Mammary epithelial cell (primary cell): ENCODE measurements at regions of chr11 and their contacts with region 1.

Region 1: DNA sequence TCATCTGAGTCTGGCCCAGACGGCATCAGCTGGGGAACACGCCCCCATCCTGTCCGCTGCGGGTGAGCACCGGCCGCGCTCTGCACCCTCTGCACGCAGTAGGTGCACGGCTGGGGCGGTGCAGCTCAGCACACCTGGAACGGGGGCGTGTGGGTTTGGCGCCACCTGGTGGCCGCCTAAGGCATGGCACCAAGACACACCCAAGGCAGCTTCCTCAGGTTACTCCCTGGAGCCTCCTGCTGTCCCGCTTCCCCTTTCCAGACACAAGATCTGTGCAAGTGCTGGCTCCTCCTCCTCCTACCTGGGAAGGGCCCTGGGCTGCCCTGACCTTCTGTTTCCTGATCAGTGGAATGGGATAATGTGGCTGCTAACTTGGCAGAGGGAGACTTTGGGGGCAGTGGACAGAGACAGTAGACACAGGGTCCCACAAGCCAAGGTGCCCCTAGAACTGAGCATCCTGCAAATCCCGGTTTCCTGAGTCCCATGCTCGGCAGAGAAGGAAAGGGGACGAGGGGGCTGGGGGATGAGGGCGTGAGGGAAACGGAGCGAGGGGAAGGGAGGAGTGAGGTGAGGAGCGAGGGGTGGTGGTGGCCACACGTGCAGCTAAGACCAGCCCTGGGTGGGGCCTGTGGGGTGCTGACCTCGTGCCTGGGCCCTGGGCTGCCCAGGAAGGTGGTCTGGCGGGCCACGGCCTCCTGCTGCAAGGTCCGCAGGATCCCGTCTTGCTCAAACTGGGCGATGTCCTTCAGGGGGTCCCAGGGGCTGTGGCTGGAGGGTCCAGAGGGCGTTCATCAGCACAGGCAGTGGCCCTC is 34.8 kb upstream of the CARS1 start:
- DNase-seq: peak; percentile 73
- H3K4me3 ChIP-seq: no peak overlapping the region
- H3K27ac ChIP-seq: no peak overlapping the region
- H3K4me1 ChIP-seq: peaks cover 18% of the 10 kb centered on the region
- H3K27me3 ChIP-seq: no peaks in the 10 kb centered on the region
- CTCF ChIP-seq: peak; percentile 96

Region 2: DNA sequence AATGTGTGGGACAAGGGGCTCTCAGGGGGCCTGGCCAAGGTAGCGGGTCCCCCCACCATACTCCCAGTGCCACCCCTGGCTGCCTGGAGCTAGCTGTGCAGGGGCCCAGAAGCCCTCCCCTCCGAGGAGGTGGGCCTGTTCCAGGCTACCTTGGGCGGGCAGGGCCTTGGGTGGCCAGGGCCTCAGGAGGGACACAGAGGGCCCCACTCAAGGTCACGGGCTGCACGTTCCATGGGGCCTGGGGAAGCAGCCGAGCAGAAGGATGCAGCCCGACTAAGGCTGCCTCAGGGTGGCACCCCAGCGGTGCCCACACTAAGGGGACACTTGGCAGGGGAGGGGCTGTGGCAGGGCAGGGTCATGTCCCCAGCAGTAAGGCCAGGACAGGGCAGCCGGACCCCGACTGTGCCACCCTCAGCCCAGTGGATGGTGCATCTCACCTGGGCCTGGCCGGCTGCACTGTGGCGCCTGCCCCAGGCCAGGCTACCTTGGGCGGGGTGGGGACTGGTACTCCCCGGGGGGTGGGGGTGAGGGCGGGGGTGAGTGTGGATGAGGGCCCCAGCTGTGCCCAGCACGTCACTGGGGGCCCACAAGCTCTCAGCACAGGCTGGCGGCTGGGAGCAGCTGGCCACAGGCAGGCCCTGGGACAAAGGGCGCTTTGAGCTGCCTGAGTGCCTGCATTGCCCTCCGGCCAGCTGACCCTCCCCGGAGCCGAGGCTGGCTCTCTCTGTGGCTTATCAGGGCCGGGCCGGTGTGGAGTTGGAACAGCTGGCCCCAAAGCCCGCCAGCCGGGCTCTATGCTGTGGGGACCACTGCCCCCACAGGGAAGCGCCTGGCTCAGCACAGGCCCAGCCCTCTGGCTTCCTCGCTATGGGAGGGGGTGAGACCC is 530.1 kb before region 1 on chr11:
- CTCF ChIA-PET with region 1: no interaction called
- dilution Hi-C with region 1: no loop called
- in situ Hi-C with region 1: no loop called
- intact Hi-C with region 1: no loop called
- DNase-seq: no peak
- H3K4me3 ChIP-seq: no peak overlapping the region
- H3K27ac ChIP-seq: no peak overlapping the region
- H3K4me1 ChIP-seq: no peaks in the 10 kb centered on the region
- H3K27me3 ChIP-seq: no peaks in the 10 kb centered on the region
- CTCF ChIP-seq: no peak

Region 3: DNA sequence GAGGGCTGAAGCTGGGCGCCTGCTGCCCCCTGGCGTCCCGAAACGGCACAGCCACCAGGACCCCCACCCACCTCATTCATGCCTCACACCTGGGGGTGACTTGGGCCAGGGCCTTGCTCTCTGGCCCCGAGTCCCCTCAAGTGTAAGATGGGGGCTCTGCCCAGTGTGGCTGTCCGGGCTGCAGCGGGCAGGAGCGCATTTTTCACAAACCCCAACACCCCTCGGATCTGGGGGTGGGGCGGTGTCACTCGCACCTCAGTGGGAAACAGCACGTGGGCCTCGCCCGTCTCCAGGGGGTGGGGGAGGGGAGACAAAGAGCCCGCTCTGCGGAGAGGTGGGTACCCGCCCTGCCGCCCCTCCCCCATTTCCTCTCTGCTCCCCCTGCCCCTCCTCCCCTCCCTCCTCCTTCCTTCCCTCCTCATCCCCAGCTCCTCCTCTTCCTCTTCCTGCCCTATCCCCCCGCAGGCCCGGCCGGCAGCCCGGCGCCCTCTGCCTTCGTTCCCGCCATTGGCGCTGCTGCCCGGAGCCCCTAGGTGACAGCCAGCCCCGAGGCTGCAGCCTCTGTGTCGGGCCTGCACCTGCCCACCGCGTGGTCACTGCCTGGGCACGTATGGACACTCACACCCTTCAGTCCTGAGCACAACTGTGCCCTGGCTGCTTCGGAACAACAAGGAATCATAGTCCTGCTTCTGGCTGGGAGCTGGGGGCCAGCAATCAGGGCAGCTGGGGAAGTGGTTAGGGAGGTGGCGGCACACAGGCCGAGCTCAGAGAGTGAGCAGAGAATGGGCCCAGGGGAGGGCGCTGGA is 199.6 kb before region 1 on chr11:
- CTCF ChIA-PET with region 1: no interaction called
- dilution Hi-C with region 1: no loop called
- in situ Hi-C with region 1: no loop called
- intact Hi-C with region 1: loop called (anchors 2 kb)
- DNase-seq: no peak
- H3K4me3 ChIP-seq: peak overlapping the region in 2 of 3 experiments; percentile 38 to 48
- H3K27ac ChIP-seq: no peak overlapping the region
- H3K4me1 ChIP-seq: peaks cover 29% of the 10 kb centered on the region
- H3K27me3 ChIP-seq: no peaks in the 10 kb centered on the region
- CTCF ChIP-seq: peak; percentile 68 to 94

Region 4: DNA sequence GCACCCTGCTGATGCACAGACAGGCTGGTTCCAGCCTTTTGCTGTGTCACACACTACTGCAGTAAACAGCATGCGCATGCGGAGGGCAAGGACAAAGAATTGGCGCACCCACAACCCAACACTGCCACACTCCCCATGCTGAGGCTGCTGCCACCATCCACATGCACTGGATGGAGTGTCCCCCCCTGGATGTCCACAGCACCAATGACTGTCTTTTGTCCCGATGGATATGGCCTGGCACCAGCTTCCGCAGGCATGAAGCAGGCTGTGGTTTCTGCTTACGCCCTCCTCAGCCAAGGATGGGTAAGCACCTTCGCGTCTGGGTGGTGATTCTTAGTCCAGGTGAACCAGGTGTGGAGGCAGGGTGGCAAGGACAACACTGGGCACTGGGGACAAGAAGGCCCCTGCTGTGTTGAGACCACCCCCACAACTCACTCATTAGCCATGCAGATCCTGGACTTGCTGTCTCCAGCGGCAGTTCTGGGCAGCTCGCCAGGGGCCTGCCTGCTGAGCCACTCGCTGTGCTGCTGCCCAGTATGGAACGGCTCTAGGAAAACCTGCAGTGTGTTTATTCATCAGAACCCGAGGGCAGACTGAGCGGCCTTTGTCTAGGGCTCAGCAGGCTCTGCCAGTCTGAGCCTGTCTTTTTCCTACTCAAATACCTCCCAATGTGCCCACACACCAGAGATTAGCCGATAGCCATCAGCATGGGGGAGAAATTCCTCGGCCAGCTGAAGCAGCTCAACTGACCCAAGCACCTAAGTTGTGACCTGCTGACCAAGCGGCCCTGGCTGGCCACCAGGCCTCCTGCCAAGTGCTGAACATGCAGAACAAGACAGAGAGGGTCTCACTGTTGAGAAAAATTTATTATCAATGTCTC is 91.7 kb before region 1 on chr11:
- CTCF ChIA-PET with region 1: no interaction called
- dilution Hi-C with region 1: loop called (anchors 5 kb)
- in situ Hi-C with region 1: no loop called
- intact Hi-C with region 1: no loop called
- DNase-seq: peak; percentile 96
- H3K4me3 ChIP-seq: no peak overlapping the region
- H3K27ac ChIP-seq: peak overlapping the region; percentile 63
- H3K4me1 ChIP-seq: peaks cover 63% of the 10 kb centered on the region
- H3K27me3 ChIP-seq: no peaks in the 10 kb centered on the region
- CTCF ChIP-seq: no peak

Region 5: DNA sequence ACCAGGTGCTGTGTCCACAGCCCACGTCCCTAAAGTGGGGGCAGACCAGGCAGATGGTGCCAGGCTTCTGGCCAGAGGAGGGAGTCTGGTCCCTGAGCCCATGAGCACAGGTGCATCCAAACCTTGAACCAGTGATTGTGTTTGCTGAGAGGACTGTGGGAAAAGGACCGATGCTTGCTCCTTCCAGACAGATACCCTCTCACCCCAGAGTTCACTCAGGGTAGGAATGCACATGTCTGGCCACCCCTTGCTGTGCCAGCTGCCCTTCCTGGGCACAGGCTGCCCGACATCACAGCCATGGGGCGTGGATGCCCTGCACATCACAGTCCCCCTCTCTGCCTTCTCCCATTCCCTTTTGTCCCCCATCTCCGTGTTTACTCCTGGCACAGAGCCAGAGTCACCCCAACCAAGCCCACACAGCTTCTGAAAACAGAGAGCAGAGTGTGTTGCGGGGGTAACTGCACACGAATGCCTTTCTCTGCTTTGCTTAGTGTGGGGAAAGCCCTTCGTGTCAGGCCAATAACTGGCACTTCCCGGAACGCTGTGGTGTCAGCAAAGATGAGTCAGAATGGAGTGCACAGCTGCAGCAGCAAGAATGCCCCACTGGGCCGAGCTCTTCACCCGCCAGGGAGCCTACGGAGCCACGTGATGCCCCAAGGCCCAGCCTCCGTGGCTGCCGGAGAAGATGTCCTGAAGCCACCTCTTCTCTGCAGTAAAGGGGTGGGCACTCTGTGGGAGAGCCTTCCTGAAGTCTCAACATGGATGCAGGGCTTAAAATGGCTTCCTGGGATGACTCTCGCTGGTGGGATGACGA is 42.4 kb before region 1 on chr11:
- CTCF ChIA-PET with region 1: interaction called, 6 read pairs
- dilution Hi-C with region 1: no loop called
- in situ Hi-C with region 1: loop called in 1 of 2 experiments (anchors 10 kb)
- intact Hi-C with region 1: loop called (anchors 2 kb)
- DNase-seq: peak; percentile 88
- H3K4me3 ChIP-seq: no peak overlapping the region
- H3K27ac ChIP-seq: peak overlapping the region; percentile 46
- H3K4me1 ChIP-seq: peaks cover 14% of the 10 kb centered on the region
- H3K27me3 ChIP-seq: no peaks in the 10 kb centered on the region
- CTCF ChIP-seq: peak; percentile 34 to 59

Region 6: DNA sequence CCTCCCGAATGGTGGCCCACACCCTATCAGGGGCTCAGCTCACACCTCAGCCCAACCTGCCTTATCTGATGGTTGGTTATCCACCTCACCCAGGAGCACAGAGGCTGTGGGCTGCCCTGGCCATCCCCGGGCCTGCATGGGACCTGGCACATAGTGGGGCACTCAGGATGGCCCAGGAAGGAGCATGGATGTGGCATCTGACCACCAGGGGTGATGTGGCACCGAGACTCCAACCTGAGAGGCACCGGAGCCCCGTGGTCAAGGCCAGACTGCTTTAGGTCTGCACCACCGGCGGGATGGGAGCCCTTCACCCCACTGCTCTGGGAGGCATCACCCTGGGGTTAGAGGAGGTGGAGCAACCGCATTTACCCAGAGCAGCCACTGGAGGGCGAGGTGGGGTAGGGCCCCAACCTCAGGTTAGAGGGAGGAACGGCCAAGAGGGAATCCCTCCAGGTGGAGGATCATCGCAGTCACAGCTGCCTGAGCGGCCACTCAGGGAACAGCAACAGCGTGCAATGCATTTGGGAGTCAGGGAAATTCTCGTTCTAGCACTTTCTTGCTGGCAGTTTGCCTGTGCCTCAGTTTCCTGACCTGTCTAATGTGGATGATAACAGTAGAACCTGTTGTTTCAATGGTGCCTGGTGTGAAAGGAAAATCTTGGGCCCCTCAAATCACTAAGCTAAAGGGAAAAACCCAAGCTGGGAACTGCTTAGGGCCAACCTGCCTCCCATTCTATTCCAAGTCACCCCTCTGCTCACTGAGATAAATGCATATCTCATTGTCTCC is 18.1 kb after region 1 on chr11:
- CTCF ChIA-PET with region 1: no interaction called
- dilution Hi-C with region 1: no loop called
- in situ Hi-C with region 1: no loop called
- intact Hi-C with region 1: no loop called
- DNase-seq: peak; percentile 34
- H3K4me3 ChIP-seq: no peak overlapping the region
- H3K27ac ChIP-seq: no peak overlapping the region
- H3K4me1 ChIP-seq: no peaks in the 10 kb centered on the region
- H3K27me3 ChIP-seq: no peaks in the 10 kb centered on the region
- CTCF ChIP-seq: peak; percentile 61 to 77

Region 7: DNA sequence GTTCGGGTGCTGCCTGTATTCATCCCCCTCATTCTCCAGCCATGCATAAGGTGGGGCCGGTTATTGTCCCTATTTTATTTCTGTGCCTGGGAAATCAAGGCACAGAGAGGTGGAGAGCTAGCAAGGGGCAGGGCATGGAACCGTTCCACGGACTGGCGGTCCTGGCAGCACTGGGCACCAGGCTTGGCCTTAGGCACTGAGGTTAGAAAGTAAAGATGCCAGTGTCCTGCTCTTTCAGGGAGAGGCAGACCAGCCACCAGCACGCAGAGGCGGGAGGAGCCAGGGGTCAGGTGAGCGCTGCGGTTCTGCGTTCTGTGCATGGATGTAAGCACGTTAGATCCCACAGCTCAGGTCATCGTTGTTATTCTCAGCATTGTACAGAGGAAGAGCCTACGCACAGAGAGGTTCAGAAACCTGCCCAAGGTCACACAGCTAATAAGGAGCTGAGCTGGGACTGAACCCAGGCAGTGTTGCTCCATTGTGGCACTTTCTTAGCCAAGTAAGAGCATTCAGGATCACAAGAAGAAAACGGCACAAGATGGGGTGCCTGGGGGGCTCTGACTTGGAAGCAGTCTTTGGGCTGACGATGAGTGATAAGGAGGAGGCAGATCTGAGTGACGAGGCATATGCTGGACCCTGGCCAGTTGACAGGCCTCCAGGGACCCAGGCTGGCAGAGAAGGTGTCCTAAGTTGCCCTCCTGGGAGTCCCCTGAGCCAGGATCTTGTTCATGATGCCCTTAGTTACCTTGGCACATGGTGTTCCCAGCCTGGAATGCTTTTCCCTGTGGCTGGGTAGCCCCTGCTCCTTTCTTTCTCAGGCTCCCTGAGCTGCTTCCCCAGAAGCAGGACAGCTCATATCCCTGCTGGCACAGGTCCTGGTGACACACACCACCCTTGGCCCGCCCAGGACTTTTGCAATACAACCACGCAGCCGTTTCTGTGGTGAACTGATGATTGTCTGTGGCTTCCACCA is 32.0 kb after region 1 on chr11:
- CTCF ChIA-PET with region 1: no interaction called
- dilution Hi-C with region 1: no loop called
- in situ Hi-C with region 1: no loop called
- intact Hi-C with region 1: no loop called
- DNase-seq: peak; percentile 94
- H3K4me3 ChIP-seq: no peak overlapping the region
- H3K27ac ChIP-seq: peak overlapping the region; percentile 29
- H3K4me1 ChIP-seq: peaks cover 42% of the 10 kb centered on the region
- H3K27me3 ChIP-seq: no peaks in the 10 kb centered on the region
- CTCF ChIP-seq: peak in 1 of 2 donors; percentile 29

Region 8: DNA sequence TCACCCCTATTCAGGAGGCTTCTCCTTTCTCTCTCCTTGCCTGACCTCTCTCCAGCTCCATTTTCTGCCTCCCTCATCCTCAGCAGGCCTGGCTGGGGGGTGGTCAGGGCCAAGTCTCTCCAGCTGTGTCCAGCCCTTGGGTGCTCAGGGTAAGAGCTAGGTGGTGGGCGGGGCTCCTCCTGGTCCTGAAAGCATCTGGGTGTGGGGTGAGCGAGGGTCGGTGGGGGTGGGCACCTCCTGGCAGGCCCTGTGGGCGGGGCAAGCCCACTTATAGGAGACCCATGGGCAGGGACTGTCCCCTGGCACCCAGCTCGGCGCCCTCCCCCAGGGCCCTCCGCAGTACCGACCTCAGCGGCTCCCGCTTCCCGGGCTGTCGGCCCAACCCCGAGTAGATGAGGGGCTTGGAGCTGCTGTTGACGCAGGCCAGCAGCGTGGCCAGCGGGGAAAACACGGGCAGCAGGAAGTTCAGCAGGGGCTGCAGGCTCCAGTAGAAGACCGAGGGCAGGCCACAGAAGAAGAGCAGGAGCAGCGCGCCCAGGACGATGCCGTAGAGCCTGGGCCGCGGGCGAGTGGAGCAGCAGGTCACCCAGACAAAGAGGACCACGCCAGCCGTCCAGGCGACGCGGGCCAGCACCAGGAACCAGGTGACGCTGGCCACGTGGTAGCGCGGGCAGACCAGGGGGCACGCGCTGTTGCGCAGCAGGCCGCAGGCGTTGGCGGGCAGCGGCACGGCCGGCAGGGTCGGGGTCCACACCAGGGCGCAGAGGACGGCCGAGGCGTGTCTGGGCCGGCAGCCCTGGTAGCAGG is 125.9 kb after region 1 on chr11:
- CTCF ChIA-PET with region 1: no interaction called
- dilution Hi-C with region 1: no loop called
- in situ Hi-C with region 1: no loop called
- intact Hi-C with region 1: loop called (anchors 1 kb)
- DNase-seq: no peak
- H3K4me3 ChIP-seq: no peak overlapping the region
- H3K27ac ChIP-seq: no peak overlapping the region
- H3K4me1 ChIP-seq: no peaks in the 10 kb centered on the region
- H3K27me3 ChIP-seq: peaks cover 3% of the 10 kb centered on the region
- CTCF ChIP-seq: no peak